ENCODE measurements at regions of chr1 and their contacts with region 1.

Region 1: DNA sequence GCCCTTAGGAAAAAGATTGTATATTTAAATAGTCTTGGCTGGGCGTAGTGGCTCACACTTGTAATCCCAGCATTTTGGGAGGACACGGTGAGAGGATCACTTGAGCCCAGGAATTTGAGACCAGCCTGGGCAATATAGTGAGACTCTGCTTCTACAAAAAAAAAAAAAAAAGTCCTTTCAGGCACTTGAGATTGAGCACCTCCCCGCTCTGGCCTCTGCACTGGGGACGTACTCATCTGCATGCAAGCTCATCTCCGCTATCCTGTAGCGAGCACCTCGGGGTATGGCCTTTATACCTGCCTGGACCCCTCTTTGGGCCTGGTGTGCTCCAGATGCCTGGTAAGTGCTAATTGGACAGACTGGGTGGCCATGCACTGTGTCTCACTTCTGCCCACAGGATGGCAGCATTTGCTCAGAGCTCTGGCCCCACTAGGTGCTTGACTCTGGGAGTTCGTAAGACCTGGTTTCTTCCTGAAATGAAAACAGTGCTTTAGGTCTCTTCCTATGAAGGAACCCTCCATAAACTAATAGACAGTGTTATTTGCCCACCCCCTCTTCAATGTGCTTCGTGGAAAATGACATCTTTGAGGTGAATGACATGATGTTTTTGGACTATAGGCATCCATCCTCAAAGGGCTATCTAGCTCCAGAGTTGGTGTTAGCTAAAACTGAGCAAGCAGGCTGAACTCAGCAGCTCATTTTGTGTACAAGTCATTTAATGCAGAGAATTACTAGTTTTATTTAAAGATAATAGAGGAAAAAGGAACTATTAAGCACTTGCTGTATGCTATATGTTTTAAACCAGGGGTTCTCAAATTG is 61.7 kb upstream of the ADAR start:
- DNase-seq: peak; percentile 71 to 92
- H3K4me3 ChIP-seq: no peak overlapping the region
- H3K27ac ChIP-seq: no peak overlapping the region
- H3K4me1 ChIP-seq: no peaks in the 10 kb centered on the region
- H3K27me3 ChIP-seq: no peaks in the 10 kb centered on the region
- CTCF ChIP-seq: peak in 5 of 7 experiments; percentile 47 to 72 (median 64)
- EP300 ChIP-seq: no peak
- POLR2A ChIP-seq: no peak

Region 2: GRCh38 chr1:154635162-154635561 is 34.5 kb before region 1 on chr1:
- intact Hi-C with region 1: no loop called
- DNase-seq: no peak
- H3K4me3 ChIP-seq: no peak overlapping the region
- H3K27ac ChIP-seq: no peak overlapping the region
- H3K4me1 ChIP-seq: no peaks in the 10 kb centered on the region
- H3K27me3 ChIP-seq: peaks cover 0 to 30% (median 0%) of the 10 kb centered on the region in 3 donors
- CTCF ChIP-seq: no peak
- EP300 ChIP-seq: no peak
- POLR2A ChIP-seq: no peak

Region 3: GRCh38 chr1:154863315-154864174 is 193.9 kb after region 1 on chr1:
- intact Hi-C with region 1: no loop called
- DNase-seq: peak; percentile 57 to 67
- H3K4me3 ChIP-seq: no peak overlapping the region
- H3K27ac ChIP-seq: peak overlapping the region in 1 of 5 donors; percentile 48
- H3K4me1 ChIP-seq: peaks cover 0 to 22% (median 17%) of the 10 kb centered on the region in 4 donors
- H3K27me3 ChIP-seq: peaks cover 0 to 49% (median 20%) of the 10 kb centered on the region in 3 donors
- CTCF ChIP-seq: peak in 5 of 7 experiments; percentile 43 to 76 (median 55)
- EP300 ChIP-seq: no peak
- POLR2A ChIP-seq: no peak

Region 4: DNA sequence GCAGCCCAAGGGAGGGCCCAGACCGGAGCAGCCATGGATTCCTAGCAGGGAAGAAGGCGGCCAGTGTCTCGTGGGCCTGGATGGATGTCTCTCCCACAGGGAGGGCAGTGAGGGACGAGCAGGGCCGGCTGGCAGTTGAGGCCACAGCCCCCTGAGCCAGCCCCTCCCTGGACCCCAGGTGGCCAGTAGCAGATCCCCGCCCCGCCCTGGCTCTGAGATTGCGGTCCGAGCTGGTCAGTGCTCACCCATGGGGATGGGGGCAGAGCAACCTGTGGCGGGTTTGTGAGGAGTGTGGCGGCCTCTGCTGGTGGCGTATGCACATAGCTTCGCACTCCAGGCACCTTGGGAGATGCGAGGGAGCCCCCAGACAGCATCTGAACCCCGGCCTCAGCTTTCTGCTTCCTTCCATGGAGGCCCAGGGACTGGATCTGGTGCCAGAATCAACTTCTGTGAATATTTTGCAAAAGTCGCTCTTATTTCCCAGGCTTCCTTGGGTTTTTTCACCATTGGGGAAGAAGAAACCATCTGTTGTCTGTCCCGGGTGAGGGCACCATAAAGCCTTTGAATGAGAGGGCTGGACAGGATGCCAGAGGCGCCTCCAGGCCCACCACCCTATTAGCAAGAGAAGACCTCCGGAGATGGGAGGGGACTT is 208.8 kb after region 1 on chr1:
- intact Hi-C with region 1: loop called (anchors 5 kb)
- DNase-seq: peak; percentile 83 to 92
- H3K4me3 ChIP-seq: no peak overlapping the region
- H3K27ac ChIP-seq: no peak overlapping the region
- H3K4me1 ChIP-seq: peaks cover 0 to 19% (median 4%) of the 10 kb centered on the region in 4 donors
- H3K27me3 ChIP-seq: peaks cover 0 to 8% (median 0%) of the 10 kb centered on the region in 3 donors
- CTCF ChIP-seq: peak in 5 of 7 experiments; percentile 74 to 90 (median 75)
- EP300 ChIP-seq: no peak
- POLR2A ChIP-seq: no peak

Measured in stomach (tissue), 19 donors.